ENCODE measurements at regions of chr3 and their contacts with region 1.

Region 1: DNA sequence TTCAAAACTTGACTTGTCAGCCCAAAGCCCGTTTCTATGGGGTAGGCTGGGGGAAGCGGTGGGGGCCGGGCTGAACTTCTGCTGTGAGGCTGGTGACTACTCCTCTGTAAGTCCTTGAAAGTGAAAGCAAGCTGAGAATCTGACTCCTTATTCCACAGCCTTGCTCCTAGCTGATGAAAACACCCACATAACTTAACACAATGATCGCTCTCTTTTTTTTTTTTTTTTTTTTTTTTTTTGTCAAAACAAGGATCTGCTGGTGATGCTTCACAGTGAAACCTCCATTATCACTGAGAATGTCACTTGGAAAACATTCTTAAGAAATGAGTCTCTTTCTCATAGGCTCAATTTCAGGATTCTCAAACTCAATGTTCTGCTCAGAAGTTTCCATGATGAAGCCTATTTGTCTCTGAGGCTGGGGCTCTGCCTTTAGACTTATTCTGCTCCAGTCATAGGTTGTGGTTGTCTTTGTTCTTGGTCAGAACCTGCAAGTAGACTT is 31.4 kb upstream of the TKT start:
- DNase-seq: no peak
- H3K4me3 Mint-ChIP-seq: no peak overlapping the region
- H3K27ac Mint-ChIP-seq: peak overlapping the region; percentile 85
- H3K4me1 Mint-ChIP-seq: peaks cover 8% of the 10 kb centered on the region
- H3K27me3 Mint-ChIP-seq: no peaks in the 10 kb centered on the region

Region 2: GRCh38 chr3:53255775-53256703 is 31.1 kb before region 1 on chr3 and contains the start of gene TKT:
- intact Hi-C with region 1: loop called (anchors 2 kb)
- DNase-seq: peak; percentile 95
- H3K4me3 Mint-ChIP-seq: peak within 1 kb of the TSS; percentile 98
- H3K27ac Mint-ChIP-seq: peak within 1 kb of the TSS; percentile 93
- H3K4me1 Mint-ChIP-seq: peaks cover 30% of the 10 kb centered on the region
- H3K27me3 Mint-ChIP-seq: peaks cover 2% of the 10 kb centered on the region
- total RNA-seq, gene TKT: 377 and 379 TPM in 2 replicates